AG04450 (cell line): ENCODE measurements at regions of chr5 and their contacts with region 1.

Region 1: GRCh38 chr5:173615884-173616576 is 420 bp downstream of the BOD1 start:
- DNase-seq: peak; percentile 54
- H3K4me3 ChIP-seq: peak overlapping the region; percentile 76
- H3K27ac ChIP-seq: peak overlapping the region; percentile 92
- H3K27me3 ChIP-seq: no peaks in the 10 kb centered on the region
- CTCF ChIP-seq: peak; percentile 77

Region 2: DNA sequence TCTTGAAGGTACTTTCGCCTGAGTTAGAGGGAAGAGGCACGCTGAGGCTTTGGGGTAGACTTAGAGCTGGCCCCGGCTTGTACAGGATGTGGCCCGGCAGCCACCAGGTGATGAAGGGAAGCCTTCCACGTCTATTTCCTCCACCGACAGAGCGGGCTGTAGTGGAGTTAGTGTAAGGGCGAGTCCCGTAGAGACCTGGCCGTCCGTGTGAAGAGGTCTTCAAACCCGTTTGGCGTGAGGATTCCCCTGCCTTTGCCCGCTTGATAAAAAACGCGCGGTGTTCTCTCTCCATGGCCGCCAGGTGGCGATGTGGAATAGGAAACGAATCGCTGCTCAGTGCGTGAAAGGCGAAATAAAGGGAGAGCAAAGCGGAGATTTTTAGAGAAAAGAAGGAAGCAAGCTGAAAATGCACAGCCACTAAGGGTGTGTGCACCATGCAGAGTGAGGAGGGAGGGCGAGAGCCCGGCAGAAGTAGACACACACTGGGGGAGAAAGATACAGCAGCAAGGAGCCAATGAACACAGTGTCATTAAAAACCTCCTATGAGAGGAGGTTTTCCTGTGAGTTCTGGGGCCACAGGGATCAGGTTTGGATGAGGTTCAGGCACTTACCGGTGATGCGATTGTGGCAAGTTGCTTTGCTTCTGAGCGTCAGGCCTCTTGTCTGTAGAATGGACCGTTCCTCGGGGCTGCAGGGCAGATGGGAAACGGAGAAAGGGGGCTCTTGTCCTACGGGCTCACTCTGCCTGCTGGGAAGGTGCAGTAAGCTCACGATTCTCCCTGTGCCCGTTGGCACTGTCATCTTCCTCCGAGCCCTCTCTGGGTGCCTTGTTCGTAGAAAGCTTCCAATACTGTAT is 322.0 kb before region 1 on chr5:
- CTCF ChIA-PET with region 1: interaction called, 138 read pairs
- POLR2A ChIA-PET with region 1: interaction called, 3 read pairs
- DNase-seq: peak; percentile 55
- H3K4me3 ChIP-seq: peak overlapping the region; percentile 15; the same call in 1 of the 2 replicates
- H3K27ac ChIP-seq: no peak overlapping the region
- H3K27me3 ChIP-seq: peaks cover 4% of the 10 kb centered on the region
- CTCF ChIP-seq: peak; percentile 88

Region 3: GRCh38 chr5:173331956-173332479 is 284.0 kb before region 1 on chr5:
- CTCF ChIA-PET with region 1: interaction called, 28 read pairs
- POLR2A ChIA-PET with region 1: interaction called, 8 read pairs
- DNase-seq: no peak
- H3K4me3 ChIP-seq: no peak overlapping the region
- H3K27ac ChIP-seq: no peak overlapping the region
- H3K27me3 ChIP-seq: no peaks in the 10 kb centered on the region
- CTCF ChIP-seq: peak; percentile 90

Region 4: DNA sequence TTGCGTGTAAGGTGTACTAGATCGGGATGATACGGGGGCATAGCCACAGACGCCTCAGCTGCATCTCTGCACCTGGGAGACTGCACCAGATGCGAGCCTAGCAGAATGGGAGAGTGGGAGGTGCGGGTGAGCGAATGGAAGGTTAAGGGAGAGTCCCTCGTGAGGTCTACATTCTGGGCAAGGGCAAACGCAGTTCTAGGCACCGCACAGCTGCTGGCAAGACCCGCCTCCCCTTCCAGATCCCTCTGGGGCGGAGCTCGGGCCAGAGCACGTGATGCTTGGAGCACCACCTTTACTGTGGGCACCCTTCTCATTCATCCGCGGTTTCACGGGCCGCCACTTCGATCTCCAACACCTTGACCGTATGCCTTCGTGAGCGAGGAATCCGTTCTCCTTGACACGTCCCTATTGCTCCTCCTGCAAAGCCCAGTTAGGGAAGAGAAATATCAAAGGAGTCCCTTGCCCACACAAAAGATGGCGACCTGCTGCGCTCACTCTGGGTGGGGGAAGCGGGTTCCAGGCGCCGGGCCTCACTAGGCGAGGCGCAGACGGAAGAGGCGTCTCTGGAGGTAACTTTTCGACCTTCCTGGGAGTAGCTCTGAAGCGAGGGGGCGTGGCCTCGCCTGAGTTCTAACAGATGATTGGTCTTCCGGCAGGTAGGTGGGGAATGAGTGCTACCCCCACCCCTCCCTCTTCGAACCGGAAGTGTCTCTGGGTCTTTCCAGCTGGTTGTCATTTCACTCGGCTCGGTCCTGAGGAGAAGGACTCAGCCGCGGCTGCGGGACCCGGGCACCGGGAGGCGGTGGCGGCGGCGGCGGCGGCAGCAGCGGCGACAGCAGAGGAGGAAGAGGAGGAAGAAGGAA is 271.8 kb after region 1 on chr5 and contains the start of gene CPEB4:
- CTCF ChIA-PET with region 1: interaction called, 10 read pairs
- POLR2A ChIA-PET with region 1: interaction called, 4 read pairs
- DNase-seq: peak; percentile 99
- H3K4me3 ChIP-seq: peak within 1 kb of the TSS; percentile 78
- H3K27ac ChIP-seq: peak within 1 kb of the TSS; percentile 84
- H3K27me3 ChIP-seq: no peaks in the 10 kb centered on the region
- CTCF ChIP-seq: no peak
- polyA plus RNA-seq, gene CPEB4: 20.3 and 21.3 TPM in 2 replicates

Region 5: GRCh38 chr5:173972925-173973615 is 357.0 kb after region 1 on chr5:
- CTCF ChIA-PET with region 1: interaction called, 222 read pairs
- POLR2A ChIA-PET with region 1: interaction called, 3 read pairs
- DNase-seq: peak; percentile 73
- H3K4me3 ChIP-seq: peak overlapping the region; percentile 58
- H3K27ac ChIP-seq: no peak overlapping the region
- H3K27me3 ChIP-seq: peaks cover 5% of the 10 kb centered on the region
- CTCF ChIP-seq: peak; percentile 82

Region 6: GRCh38 chr5:174317259-174317894 is 701.3 kb after region 1 on chr5:
- CTCF ChIA-PET with region 1: interaction called, 41 read pairs
- POLR2A ChIA-PET with region 1: no interaction called
- DNase-seq: no peak
- H3K4me3 ChIP-seq: no peak overlapping the region
- H3K27ac ChIP-seq: no peak overlapping the region
- H3K27me3 ChIP-seq: peaks cover 12% of the 10 kb centered on the region
- CTCF ChIP-seq: peak; percentile 95